ENCODE measurements at regions of chr20 and their contacts with region 1.

Region 1: GRCh38 chr20:20083807-20084206 is 31.5 kb downstream of the CFAP61 start:
- DNase-seq: peak; percentile 56
- H3K4me3 Mint-ChIP-seq: peak overlapping the region; percentile 20
- H3K27ac Mint-ChIP-seq: peak overlapping the region; percentile 95
- H3K4me1 Mint-ChIP-seq: peaks cover 44% of the 10 kb centered on the region
- H3K27me3 Mint-ChIP-seq: no peaks in the 10 kb centered on the region
- CTCF ChIP-seq: peak; percentile 55

Region 2: DNA sequence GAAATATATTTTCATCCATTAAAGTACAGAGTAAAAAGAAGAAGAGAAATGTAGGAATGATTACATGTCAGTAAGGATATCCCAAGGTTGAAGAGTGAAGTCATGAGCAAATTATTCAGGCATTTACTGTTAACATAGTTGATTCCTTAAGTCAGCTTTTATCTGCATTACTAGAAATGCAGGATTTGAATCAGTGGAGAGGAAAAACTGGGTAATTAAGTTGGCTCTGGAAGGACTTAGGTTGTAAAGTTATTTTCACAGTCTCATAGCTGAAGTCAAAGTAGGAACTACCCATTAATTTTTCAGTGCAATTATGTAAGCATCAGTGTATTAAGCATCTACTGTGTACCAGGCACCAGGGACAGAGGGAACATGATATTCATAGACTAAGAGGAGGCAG is 58.9 kb before region 1 on chr20:
- CTCF ChIA-PET with region 1: no interaction called
- POLR2A ChIA-PET with region 1: no interaction called
- intact Hi-C with region 1: no loop called
- DNase-seq: no peak
- H3K4me3 Mint-ChIP-seq: no peak overlapping the region
- H3K27ac Mint-ChIP-seq: peak overlapping the region; percentile 3
- H3K4me1 Mint-ChIP-seq: peaks cover 19% of the 10 kb centered on the region
- H3K27me3 Mint-ChIP-seq: no peaks in the 10 kb centered on the region
- CTCF ChIP-seq: no peak

Region 3: GRCh38 chr20:20096421-20096820 is 12.6 kb after region 1 on chr20:
- CTCF ChIA-PET with region 1: interaction called, 22 read pairs
- POLR2A ChIA-PET with region 1: interaction called, 8 read pairs
- intact Hi-C with region 1: no loop called
- DNase-seq: no peak
- H3K4me3 Mint-ChIP-seq: no peak overlapping the region
- H3K27ac Mint-ChIP-seq: no peak overlapping the region
- H3K4me1 Mint-ChIP-seq: peaks cover 9% of the 10 kb centered on the region
- H3K27me3 Mint-ChIP-seq: no peaks in the 10 kb centered on the region
- CTCF ChIP-seq: no peak

Region 4: GRCh38 chr20:20360464-20360863 is 276.7 kb after region 1 on chr20:
- CTCF ChIA-PET with region 1: interaction called, 5 read pairs
- POLR2A ChIA-PET with region 1: no interaction called
- intact Hi-C with region 1: loop called (anchors 1 kb)
- DNase-seq: peak; percentile 70
- H3K4me3 Mint-ChIP-seq: no peak overlapping the region
- H3K27ac Mint-ChIP-seq: no peak overlapping the region
- H3K4me1 Mint-ChIP-seq: peaks cover 22% of the 10 kb centered on the region
- H3K27me3 Mint-ChIP-seq: peaks cover 57% of the 10 kb centered on the region
- CTCF ChIP-seq: peak; percentile 69

Region 5: DNA sequence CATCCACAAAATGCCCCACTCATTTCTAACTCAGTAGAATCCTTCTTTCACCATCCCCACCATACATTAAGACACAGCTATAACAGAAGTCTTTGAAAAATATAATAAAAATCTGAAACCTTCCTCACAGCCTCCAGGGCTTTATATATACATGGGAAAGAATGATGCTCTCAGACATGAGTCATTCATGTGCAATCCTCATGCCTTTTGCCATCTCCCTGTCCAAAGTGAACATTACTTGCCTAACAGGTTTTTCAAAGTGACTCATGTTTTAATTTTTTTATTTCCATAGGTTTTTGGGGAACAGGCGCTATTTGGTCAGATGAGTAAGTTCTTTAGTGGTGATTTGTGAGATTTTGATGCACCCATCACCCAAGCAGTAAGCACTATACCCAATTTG is 465.9 kb after region 1 on chr20:
- CTCF ChIA-PET with region 1: interaction called, 3 read pairs
- POLR2A ChIA-PET with region 1: interaction called, 13 read pairs
- intact Hi-C with region 1: no loop called
- DNase-seq: peak; percentile 91
- H3K4me3 Mint-ChIP-seq: peak overlapping the region; percentile 19
- H3K27ac Mint-ChIP-seq: peak overlapping the region; percentile 74
- H3K4me1 Mint-ChIP-seq: peaks cover 25% of the 10 kb centered on the region
- H3K27me3 Mint-ChIP-seq: no peaks in the 10 kb centered on the region
- CTCF ChIP-seq: no peak

Region 6: DNA sequence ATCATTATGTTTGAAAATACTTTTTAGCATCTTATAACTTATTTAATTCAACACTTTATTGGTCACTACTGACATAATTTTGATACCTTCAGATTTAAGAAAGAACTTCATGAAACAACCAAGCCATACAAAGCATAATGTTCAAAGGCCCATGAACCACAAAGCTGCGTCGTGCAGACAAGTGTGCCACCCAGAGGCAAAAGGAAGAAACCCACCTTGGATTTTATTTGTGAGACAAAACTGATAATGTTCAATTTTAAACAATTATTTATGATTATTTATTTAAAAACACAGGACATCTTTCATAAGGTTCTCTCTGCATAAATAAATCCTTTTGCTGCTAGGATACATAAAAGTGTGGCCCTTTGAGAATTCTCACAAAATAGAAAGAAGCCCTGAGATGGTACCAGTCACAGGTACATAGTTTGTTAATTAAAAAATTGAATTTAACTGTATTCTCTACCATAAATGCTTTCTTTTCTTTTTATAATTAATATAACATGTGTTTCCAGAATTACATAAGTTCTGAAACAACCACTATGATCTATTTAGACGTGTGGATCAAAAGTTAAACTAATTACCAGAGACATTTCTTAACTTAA is 484.9 kb after region 1 on chr20:
- CTCF ChIA-PET with region 1: interaction called, 24 read pairs
- POLR2A ChIA-PET with region 1: interaction called, 4 read pairs
- intact Hi-C with region 1: loop called (anchors 1 kb)
- DNase-seq: peak; percentile 49
- H3K4me3 Mint-ChIP-seq: no peak overlapping the region
- H3K27ac Mint-ChIP-seq: no peak overlapping the region
- H3K4me1 Mint-ChIP-seq: no peaks in the 10 kb centered on the region
- H3K27me3 Mint-ChIP-seq: no peaks in the 10 kb centered on the region
- CTCF ChIP-seq: peak; percentile 81